ENCODE measurements at regions of chr2 and their contacts with region 1.

Region 1: GRCh38 chr2:121974897-121975661 is 219.6 kb downstream of the TSN start:
- DNase-seq: peak; percentile 53
- ATAC-seq: peak; percentile 90 to 94

Region 2: DNA sequence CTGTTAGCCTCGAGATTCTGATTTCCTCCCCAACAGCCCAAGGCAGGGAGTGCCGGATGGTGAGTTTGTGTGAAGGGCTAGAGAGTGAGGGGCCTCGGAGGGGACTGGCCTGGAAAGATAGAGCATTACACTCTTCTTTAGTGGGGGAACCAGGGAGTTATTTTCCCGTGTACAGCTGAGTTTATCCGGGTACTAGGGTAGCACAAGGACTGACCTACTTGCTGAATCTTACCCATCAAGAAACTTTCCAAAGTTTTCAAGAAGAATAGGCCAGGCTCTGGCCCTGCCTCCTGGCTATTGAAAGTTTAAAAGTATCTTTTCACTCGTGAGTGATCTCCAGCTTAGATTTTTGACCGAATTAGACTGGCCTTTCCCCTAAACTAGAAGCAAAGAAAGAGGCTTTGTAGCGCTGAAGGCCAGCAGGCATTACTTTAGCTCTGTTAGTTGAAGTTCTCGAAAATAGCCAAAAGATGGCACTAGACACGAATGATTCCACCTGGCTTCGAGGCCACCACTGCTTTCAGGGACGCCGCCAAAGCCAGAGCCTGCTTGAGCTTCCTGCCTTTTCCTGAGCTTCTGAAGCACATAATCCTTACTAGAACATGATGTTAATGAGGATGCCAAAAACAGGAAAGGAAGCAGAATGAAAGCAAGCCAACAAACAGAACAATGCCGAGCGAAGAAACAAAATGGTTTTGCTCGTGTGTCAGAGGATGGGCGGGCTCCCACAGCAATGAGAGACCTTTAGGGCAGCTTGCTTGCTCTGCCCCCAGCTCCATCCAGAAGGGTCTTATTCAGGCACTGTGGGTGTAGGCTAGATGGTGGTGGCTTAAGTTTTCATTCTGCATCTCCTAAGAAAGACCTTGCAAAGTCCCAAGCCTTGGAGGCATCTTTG is 163.9 kb before region 1 on chr2:
- intact Hi-C with region 1: loop called in 1 of 2 experiments (anchors 10 kb)
- DNase-seq: peak; percentile 70
- ATAC-seq: peak; percentile 79 to 92

Region 3: DNA sequence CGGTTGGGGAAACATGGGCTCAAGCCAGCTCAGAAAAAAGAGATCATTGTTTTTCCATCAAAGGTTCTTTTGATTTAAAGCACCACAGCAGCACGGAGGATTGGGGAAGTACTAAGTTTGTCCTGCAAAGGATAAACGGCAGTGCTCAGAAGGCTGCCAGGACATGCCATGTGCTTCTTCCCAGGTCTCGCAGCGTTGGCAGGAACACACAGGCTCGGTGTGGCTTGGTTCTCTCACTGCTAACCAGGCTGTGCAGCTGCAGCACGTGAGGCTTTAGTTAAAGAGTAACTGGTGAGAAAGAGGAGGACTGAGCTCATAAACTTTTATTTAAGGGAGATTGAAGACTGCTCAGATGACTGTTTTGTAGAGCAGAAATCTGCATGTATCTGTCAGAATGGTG is 44.6 kb after region 1 on chr2:
- intact Hi-C with region 1: no loop called
- DNase-seq: no peak
- ATAC-seq: peak in 1 of 2 donors; percentile 47